ENCODE measurements at regions of chr7 and their contacts with region 1.

Region 1: DNA sequence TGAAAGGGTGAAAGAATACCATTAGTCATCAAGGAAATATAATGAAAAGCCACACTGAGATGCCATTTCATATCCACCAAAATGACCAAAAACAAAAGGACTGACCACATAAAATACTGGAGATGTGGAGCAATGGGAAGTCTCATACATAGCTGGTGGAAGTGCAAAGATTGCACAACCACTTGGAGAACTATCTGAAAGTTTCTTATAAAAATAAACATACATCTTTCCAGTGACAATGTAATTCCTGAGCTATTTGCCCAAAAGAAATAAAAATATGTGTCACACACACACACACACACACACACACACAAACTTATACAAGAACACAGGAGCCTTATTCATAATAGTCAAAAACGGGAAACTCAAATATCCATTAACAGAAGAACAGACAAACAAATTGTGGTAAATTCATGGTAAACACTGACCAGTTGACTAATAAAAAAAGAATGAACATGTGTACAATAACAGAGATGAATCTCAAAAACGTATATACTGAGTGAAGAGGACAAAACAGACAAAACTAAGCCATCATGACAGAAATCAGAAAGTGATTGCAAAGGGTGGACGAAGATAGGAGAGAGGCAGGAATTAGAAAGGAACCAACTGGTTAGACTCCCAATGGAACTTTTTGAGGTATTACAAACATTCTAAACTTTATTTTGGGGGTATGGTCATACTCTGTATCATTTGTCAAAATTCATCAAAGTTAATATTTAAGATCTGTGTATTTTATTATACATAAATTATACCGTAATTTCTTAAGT is 21.5 kb downstream of the WASL start:
- DNase-seq: no peak
- ATAC-seq: peak; percentile 31

Region 2: GRCh38 chr7:123666492-123666891 is 60.8 kb before region 1 on chr7:
- intact Hi-C with region 1: no loop called
- DNase-seq: no peak
- ATAC-seq: no peak

Region 3: GRCh38 chr7:123692471-123692877 is 34.8 kb before region 1 on chr7:
- intact Hi-C with region 1: loop called (anchors 5 kb)
- DNase-seq: no peak
- ATAC-seq: no peak

Measured in Right ventricle myocardium inferior (tissue), 1 donor.